ENCODE measurements at regions of chr14 and their contacts with region 1.

Region 1: GRCh38 chr14:34873591-34874385 is 1.4 kb downstream of the BAZ1A start:
- DNase-seq: no peak
- ATAC-seq: peak; percentile 82
- H3K4me3 ChIP-seq: peak overlapping the region; percentile 72 to 82
- H3K27ac ChIP-seq: peak overlapping the region; percentile 88
- H3K4me1 ChIP-seq: peaks cover 7% of the 10 kb centered on the region
- H3K27me3 ChIP-seq: no peaks in the 10 kb centered on the region
- CTCF ChIP-seq: no peak

Region 2: GRCh38 chr14:34699873-34700621 is 173.7 kb before region 1 on chr14:
- CTCF ChIA-PET with region 1: no interaction called
- POLR2A ChIA-PET with region 1: no interaction called
- in situ Hi-C with region 1: no loop called
- intact Hi-C with region 1: no loop called
- DNase-seq: peak; percentile 93
- ATAC-seq: peak; percentile 93
- H3K4me3 ChIP-seq: peak overlapping the region in 1 of 2 experiments; percentile 17; a peak in 1 of 4 replicates
- H3K27ac ChIP-seq: peak overlapping the region; percentile 97
- H3K4me1 ChIP-seq: peaks cover 12% of the 10 kb centered on the region; the same call in 1 of the 2 replicates
- H3K27me3 ChIP-seq: no peaks in the 10 kb centered on the region
- CTCF ChIP-seq: no peak

Region 3: DNA sequence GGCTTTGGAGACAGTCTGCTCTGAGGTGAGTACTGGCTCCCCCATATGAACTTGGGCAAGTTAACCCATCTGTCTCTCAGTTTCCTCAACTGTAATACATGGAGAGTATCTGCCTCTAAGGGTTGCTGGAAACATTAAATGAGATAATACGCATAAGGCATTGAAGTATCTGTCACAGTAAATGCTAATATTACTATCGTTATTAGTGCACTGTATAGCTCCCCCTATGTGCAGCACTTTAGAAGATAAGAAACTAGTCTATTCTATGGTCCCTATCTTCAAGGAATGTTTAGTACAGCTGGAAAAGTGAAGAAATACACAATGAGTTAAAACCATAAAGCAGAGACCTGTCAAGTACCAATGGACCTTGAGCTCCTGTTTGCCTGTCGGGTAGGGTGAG is 107.7 kb before region 1 on chr14:
- CTCF ChIA-PET with region 1: no interaction called
- POLR2A ChIA-PET with region 1: no interaction called
- in situ Hi-C with region 1: no loop called
- intact Hi-C with region 1: no loop called
- DNase-seq: no peak
- ATAC-seq: no peak
- H3K4me3 ChIP-seq: no peak overlapping the region
- H3K27ac ChIP-seq: no peak overlapping the region; the same call in 1 of the 2 replicates
- H3K4me1 ChIP-seq: no peaks in the 10 kb centered on the region
- H3K27me3 ChIP-seq: no peaks in the 10 kb centered on the region
- CTCF ChIP-seq: no peak; the same call in 1 of the 2 replicates

Region 4: GRCh38 chr14:34982417-34983147 is 108.8 kb after region 1 on chr14 and contains the start of gene SRP54:
- CTCF ChIA-PET with region 1: no interaction called
- POLR2A ChIA-PET with region 1: interaction called, 5 read pairs
- in situ Hi-C with region 1: no loop called
- intact Hi-C with region 1: loop called (anchors 5 kb)
- DNase-seq: peak; percentile 87
- ATAC-seq: peak; percentile 95
- H3K4me3 ChIP-seq: peak within 1 kb of the TSS; percentile 90 to 97
- H3K27ac ChIP-seq: peak within 1 kb of the TSS; percentile 98
- H3K4me1 ChIP-seq: peaks cover 15% of the 10 kb centered on the region
- H3K27me3 ChIP-seq: no peaks in the 10 kb centered on the region
- CTCF ChIP-seq: no peak
- total RNA-seq, gene SRP54: 53.2 TPM